Activated T-helper 2 cell treated with anti-CD3 and anti-CD28 coated beads, Interferon-gamma antibody, Interleukin-2, Interleukin-4, amounts not matched to agents 10 μg/mL and 5 μg/mL and 100 μg/mL, durations not matched to agents 14 hours and 24 hours and 36 hours (primary cell): ENCODE measurements at regions of chr17 and their contacts with region 1.

Region 1: DNA sequence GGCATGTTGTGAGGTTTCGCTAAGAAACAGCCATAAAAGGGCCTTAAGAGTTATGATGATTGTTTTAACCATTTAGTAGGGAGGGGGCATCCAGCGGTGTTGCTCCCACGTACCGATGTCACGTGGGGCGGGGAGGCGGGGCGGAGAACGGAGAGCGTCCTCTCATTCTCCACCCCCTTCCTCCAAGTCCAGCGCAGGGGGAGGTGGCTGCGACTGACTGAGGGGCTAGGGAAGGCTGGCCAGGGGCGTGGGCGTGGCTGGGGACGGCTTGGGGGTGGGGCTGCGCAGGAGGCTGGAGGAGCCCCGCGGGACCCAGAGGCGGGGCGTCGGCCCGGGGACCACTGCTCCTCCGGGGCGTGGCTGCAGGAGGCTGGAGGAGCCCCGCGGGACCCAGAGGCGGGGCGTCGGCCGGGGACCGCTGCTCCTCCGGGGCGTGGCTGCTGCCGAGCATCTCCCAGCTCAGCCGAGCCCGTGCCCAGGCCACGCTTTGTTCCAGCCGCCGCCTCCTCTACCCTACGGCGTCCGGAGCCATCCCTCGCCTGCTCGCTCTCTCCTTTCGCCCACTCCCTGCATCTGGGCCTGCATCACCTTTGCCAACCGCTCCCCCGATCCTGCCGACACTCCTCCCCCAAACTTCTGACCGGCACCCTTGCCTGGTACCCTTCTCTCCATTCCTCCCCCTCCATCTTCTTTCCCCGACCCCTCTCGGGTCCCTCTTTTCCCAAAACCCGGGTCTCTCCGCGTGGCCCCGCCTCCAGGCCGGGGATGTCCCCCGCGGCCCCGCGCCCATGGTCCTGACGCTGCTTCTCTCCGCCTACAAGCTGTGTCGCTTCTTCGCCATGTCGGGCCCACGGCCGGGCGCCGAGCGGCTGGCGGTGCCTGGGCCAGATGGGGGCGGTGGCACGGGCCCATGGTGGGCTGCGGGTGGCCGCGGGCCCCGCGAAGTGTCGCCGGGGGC is at the start of gene SARM1:
- DNase-seq: peak; percentile 84
- H3K4me3 Mint-ChIP-seq: peak within 1 kb of the TSS; percentile 95
- H3K27ac Mint-ChIP-seq: peak within 1 kb of the TSS; percentile 93
- H3K4me1 Mint-ChIP-seq: peaks cover 13% of the 10 kb centered on the region
- H3K27me3 Mint-ChIP-seq: no peaks in the 10 kb centered on the region
- total RNA-seq, gene SARM1: 35.0 and 35.9 TPM in 2 replicates

Region 2: DNA sequence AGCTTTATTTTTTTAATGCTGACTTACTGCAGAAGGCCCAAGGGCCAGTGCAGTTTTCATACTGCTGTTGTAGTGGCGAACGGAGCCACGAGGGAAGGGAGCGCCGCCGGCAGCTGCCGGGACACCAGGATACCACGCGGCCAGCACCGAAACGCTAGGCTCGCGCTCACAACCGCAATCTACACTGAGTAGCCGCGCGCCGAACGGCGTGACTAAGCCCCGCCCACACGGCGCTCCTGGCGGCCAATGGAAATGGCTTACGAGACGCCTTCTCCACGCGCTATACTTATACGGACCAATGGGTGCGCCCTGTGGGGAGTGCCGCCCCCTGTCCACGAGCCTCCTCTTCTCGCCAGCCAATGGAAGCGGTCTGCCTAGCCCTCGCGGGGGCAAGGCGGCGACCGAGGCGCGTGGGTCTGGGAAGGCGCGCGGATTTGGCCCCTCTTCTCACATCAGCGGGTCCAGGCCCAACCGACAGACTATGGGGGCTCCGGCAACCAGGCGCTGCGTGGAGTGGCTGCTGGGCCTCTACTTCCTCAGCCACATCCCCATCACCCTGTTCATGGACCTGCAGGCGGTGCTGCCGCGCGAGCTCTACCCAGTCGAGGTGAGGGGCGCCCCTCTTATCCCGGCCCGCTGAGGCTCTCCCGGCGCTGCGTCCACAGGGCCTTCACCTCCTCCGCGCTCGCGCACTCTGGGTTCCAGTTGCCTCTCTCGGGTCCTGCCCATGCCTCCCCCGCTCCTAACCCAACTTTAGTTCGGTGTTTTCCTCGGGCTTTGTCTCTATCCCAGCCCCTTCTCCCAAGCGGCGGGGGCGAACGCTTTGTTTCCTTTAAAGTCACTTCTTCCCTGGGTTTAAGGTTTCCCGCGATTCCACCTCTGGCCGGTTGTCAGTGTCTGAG is 52.5 kb before region 1 on chr17 and contains the start of gene TMEM97:
- intact Hi-C with region 1: loop called (anchors 10 kb)
- DNase-seq: peak; percentile 96
- H3K4me3 Mint-ChIP-seq: peak within 1 kb of the TSS; percentile 90
- H3K27ac Mint-ChIP-seq: peak within 1 kb of the TSS; percentile 88
- H3K4me1 Mint-ChIP-seq: peaks cover 39% of the 10 kb centered on the region
- H3K27me3 Mint-ChIP-seq: no peaks in the 10 kb centered on the region
- total RNA-seq, gene TMEM97: 60.5 and 61.8 TPM in 2 replicates

Region 3: GRCh38 chr17:28357061-28357900 is 14.2 kb before region 1 on chr17 and contains the start of gene POLDIP2:
- intact Hi-C with region 1: loop called (anchors 1 kb)
- DNase-seq: peak; percentile 96
- H3K4me3 Mint-ChIP-seq: peak within 1 kb of the TSS; percentile 97
- H3K27ac Mint-ChIP-seq: peak within 1 kb of the TSS; percentile 95
- H3K4me1 Mint-ChIP-seq: peaks cover 22% of the 10 kb centered on the region
- H3K27me3 Mint-ChIP-seq: no peaks in the 10 kb centered on the region
- total RNA-seq, gene POLDIP2: 89.7 and 93.2 TPM in 2 replicates